ENCODE measurements at regions of chr15 and their contacts with region 1.

Region 1: DNA sequence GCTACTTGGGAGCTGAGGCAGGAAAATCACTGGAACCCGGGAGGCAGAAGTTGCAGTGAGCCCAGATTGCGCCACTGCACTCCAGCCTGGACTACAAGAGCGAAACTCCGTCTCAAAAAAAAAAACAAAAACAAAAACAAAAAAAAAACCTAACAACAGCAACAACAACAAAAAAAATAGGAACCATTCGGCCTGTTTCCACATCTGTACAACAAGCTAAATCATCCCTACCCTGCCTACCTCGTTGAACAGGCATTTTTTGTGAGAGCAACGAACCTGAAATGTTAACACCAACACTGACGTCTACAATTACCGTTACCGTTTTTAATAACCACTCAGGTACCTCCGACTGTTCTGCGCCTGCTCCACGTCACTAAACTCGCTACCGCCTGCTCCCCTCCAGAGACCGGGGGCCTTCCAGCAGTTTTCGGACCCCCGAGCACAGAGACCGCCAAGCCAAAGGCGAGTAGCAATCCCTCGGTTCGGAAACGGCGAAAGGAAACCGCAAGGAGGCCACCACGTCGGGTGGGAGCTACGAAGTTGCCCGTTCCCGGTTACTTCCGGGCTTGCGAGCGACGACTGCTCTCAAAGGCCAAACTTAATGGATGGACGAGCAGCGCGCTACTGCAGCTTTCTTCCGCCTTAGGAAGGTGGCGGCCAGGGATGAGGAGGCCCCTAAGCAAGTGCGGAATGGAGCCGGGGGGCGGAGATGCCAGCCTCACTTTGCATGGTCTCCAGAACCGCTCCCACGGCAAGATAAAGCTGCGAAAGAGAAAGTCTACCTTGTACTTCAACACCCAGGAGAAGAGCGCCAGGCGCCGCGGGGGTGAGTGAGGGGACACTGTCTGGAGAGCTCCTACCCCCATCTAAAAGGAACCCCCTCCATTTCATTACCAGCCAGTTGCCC is at the starts of genes PIGB and PIGBOS1:
- DNase-seq: peak; percentile 84
- H3K4me3 Mint-ChIP-seq: peak within 1 kb of the TSS; percentile 98
- H3K27ac Mint-ChIP-seq: peak within 1 kb of the TSS; percentile 99
- H3K4me1 Mint-ChIP-seq: peaks cover 63% of the 10 kb centered on the region
- H3K27me3 Mint-ChIP-seq: no peaks in the 10 kb centered on the region
- total RNA-seq, gene PIGB: 22.2 to 23.4 TPM
- total RNA-seq, gene PIGBOS1: 11.0 to 11.4 TPM

Region 2: DNA sequence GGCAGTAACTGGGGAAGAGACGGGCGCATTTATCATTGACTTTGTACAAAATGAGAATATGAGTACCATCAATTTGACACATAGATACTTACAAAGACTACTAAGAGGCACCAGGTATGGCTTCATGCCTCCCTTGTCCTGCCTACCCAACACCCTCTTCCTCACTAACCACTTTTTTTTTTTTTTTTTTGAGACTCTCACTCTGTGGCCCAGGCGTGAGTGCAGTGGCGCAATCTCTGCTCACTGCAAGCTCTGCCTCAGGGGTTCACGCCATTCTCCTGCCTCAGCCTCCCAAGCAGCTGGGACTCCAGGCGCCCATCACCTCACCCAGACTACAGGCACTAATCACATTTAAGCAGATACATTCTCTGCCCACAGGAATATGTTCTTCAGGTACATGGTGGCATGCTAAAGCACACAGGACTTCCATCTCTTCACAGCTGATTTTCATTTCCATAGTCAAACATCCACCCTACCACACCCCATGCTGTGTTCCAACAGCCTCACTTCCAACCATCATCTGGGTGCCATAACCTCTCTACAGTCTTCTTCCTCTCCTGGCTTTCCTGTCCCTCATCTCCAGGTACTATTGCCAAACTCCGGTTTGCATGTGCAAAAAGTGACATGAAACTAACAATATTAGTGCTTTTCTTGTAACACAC is 70.9 kb before region 1 on chr15:
- CTCF ChIA-PET with region 1: no interaction called
- POLR2A ChIA-PET with region 1: no interaction called
- DNase-seq: no peak
- H3K4me3 Mint-ChIP-seq: no peak overlapping the region
- H3K27ac Mint-ChIP-seq: no peak overlapping the region
- H3K4me1 Mint-ChIP-seq: peaks cover 63% of the 10 kb centered on the region
- H3K27me3 Mint-ChIP-seq: no peaks in the 10 kb centered on the region

Region 3: GRCh38 chr15:55407949-55408791 is 89.3 kb after region 1 on chr15 and contains the starts of genes CCPG1 and PIERCE2:
- CTCF ChIA-PET with region 1: interaction called, 13 read pairs
- POLR2A ChIA-PET with region 1: no interaction called
- DNase-seq: peak; percentile 89
- H3K4me3 Mint-ChIP-seq: peak within 1 kb of the TSS; percentile 87
- H3K27ac Mint-ChIP-seq: peak within 1 kb of the TSS; percentile 91
- H3K4me1 Mint-ChIP-seq: peaks cover 29% of the 10 kb centered on the region
- H3K27me3 Mint-ChIP-seq: no peaks in the 10 kb centered on the region
- total RNA-seq, gene CCPG1: 13.0 to 13.1 TPM
- total RNA-seq, gene PIERCE2: 0.60 TPM in 1 of 2 experiments, not detected in the other

Measured in activated CD4-positive, alpha-beta T cell treated with anti-CD3 and anti-CD28 coated beads, Interleukin-2, amount 10 ng/mL, durations not matched to agents 7 days and 5 days (primary cell).